ENCODE measurements at regions of chr17 and their contacts with region 1.

Region 1: DNA sequence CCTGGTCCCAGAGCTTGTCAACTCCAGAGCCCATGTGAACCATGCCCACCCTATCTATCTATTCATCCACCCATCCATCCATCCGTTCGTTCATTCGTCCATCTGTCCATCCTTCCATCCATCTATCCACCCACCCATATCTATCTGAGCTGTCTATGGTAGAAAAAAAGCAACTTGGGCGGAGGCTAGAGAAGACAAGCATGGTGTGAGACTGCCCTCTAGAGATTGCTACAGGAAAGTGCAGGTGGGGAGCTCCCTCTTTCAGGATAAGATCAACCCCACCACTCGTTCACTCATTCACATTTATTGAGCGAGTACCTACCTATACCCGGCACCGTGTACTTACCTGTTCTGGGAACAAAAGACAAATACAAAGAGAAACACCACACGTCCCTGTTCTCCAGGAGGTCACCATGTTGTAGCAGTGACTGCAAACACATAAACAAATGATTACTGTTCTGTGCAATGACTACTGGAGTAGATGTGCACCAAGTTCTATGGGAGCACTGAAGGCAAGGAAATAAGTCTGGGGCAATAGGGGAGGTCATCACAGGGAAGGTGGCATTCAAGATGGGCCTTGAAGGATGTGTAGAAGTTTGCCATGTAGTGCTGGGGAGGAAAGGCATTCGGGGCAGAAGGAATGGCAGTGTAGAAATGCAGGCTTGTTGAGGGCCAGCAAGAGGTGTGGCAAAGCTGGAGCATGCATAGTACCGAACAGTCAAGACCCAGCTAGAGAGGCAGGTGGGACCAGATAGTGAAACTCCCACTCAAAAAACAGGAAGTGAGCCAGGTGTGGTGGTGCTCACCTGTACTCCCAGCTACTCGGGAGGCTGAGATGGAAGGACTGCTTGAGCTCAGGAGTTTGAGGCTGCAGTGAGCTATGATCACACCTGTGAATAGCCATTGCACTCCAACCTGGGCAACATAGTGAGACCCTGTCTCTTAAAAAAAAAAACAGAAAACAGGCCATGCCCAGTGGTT is 13.4 kb upstream of the ATP5MC1 start:
- DNase-seq: peak; percentile 76
- H3K4me3 ChIP-seq: no peak overlapping the region
- H3K27ac ChIP-seq: no peak overlapping the region
- H3K4me1 ChIP-seq: no peaks in the 10 kb centered on the region
- H3K27me3 ChIP-seq: no peaks in the 10 kb centered on the region
- CTCF ChIP-seq: peak; percentile 87 to 89
- POLR2A ChIP-seq: no peak

Region 2: DNA sequence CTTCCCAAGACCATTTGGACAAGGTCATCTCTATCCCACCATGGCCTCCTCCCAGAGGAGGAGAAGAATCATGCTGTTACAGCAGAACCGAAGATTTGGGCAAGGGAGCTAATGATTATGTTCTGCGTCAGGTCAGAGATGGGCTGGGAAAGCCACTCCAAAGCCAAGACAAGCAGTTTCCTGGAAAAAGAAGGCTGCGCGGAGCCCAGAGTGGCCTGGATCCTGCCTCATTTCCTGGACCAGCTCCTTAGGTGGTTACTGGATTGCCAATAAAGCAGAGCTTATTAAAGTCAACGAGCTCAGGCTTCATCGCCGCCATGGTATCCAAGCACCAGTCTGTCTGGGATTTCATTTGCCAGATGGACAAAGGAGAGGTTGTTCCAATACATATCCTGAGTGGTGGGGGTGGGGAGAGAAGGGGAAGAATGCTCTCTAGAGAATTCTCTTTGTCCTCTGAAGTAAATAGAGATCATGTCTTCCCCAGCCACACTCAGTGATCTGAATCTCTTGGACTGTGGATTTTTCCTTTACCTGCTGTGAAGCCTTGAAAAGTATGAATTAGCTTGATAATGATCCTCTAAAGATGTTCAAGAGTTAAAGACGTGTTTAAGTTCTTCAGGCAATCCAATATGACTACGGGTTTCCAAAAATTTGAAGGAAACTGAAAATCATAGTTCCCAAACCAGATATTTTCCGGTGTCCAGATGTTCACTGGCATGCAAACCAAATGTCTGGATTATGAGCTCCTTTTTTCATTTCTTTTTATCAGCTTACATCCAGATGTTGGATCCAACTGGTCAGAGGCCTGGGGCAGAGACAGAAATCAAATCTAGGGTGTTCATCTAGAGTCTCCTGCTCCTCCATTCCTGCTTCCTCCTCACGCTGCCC is 174.6 kb before region 1 on chr17:
- CTCF ChIA-PET with region 1: interaction called, 11 read pairs
- POLR2A ChIA-PET with region 1: no interaction called
- dilution Hi-C with region 1: no loop called
- intact Hi-C with region 1: no loop called
- DNase-seq: no peak
- H3K4me3 ChIP-seq: no peak overlapping the region
- H3K27ac ChIP-seq: no peak overlapping the region
- H3K4me1 ChIP-seq: no peaks in the 10 kb centered on the region
- H3K27me3 ChIP-seq: peaks cover 40 to 46% of the 10 kb centered on the region in 2 experiments
- CTCF ChIP-seq: no peak
- POLR2A ChIP-seq: no peak

Region 3: DNA sequence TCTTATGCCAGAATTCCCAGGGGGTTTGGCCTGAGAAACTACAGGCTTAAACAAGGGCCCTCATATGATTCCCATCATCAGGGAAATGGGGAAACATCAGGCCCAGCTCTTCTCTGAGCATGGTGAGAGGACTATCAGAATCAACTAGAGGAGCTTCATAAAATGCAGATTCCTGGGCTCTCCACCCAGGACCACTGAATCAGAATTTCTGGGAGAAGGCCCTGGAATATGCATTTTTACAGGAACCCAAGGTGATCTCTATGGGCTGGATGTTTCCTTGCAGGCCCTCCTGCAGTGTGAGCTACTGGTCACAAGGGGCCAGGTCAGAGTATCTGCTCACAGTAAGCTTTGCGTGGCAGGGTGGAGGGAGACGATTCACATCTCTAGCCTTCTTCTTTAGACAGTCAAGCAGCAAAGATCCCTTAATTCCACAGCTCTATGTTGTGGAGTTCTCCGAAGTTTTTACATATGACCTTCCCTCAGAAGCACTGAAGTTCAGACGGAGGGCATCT is 111.9 kb before region 1 on chr17:
- CTCF ChIA-PET with region 1: interaction called, 12 read pairs
- POLR2A ChIA-PET with region 1: no interaction called
- dilution Hi-C with region 1: no loop called
- intact Hi-C with region 1: no loop called
- DNase-seq: no peak
- H3K4me3 ChIP-seq: no peak overlapping the region
- H3K27ac ChIP-seq: no peak overlapping the region
- H3K4me1 ChIP-seq: no peaks in the 10 kb centered on the region
- H3K27me3 ChIP-seq: peaks cover 20 to 33% of the 10 kb centered on the region in 2 experiments
- CTCF ChIP-seq: no peak
- POLR2A ChIP-seq: no peak

Region 4: DNA sequence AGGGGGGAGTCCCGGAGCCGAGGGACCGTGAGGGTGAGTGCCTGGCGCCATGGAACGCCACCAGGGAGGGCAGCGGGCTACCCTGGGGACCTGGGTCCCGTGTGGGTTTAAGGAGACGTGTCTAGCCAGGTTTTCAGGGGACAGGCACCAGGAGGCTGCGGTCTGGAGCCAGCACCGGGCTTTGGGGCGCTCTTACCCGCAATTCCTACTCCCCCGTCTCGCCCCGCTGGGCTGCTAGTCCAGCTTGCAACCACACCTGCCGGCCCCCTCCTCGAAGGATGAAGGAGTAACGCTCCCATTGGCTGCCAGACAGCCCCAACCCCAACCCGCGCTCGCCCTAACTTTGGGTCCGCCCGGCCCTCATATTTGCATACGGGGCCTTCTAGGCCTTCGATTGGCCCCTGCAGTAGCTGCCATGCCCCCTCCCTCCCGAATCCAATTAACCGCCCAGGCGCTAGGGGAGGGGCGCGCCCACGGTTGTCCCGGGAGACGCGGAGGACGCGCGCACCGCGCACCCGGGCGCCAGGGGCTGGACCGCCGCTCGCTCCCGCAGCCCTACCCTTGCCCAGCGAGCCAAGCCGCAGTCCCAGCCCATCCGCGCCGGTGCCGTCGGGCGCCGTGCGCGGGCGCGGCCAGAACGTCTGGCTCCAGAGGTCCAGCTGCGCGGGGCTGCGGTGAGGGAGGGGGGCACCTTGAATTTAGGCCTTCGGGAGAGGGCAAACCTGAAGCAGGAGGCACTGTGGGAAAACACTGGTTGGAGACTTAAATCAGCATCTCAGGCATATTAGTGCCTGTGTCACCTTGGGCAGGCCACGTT is 62.2 kb before region 1 on chr17 and contains the start of gene TTLL6:
- CTCF ChIA-PET with region 1: interaction called, 1,186 read pairs
- POLR2A ChIA-PET with region 1: interaction called, 3 read pairs
- dilution Hi-C with region 1: no loop called
- intact Hi-C with region 1: loop called (anchors 1 kb)
- DNase-seq: peak; percentile 85
- H3K4me3 ChIP-seq: peak within 1 kb of the TSS in 2 of 3 experiments; percentile 14 to 40
- H3K27ac ChIP-seq: no peak within 1 kb of the TSS
- H3K4me1 ChIP-seq: peaks cover 6% of the 10 kb centered on the region
- H3K27me3 ChIP-seq: peaks cover 11 to 21% of the 10 kb centered on the region in 2 experiments
- CTCF ChIP-seq: no peak
- POLR2A ChIP-seq: no peak
- total RNA-seq, gene TTLL6: not detected in 2 replicates

Region 5: DNA sequence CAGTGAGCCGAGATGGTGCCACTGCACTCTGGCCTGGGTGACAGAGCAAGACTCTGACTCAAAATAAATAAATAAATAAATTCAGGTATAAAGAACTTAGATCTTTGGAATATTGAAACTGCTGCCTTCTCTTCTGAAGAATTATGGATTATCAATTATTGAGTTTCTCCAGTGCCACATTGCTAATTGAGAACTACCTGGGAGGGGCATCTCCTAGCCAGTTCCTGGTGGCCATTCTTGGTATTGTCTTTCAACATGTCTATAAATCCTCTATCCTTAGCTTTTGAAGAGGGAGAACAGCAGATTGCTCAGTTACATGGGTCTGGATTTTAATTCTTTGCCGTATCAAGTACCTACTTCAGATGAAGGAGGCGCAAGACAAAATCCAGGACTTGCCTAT is 19.2 kb before region 1 on chr17:
- CTCF ChIA-PET with region 1: interaction called, 44 read pairs
- POLR2A ChIA-PET with region 1: no interaction called
- dilution Hi-C with region 1: no loop called
- intact Hi-C with region 1: no loop called
- DNase-seq: no peak
- H3K4me3 ChIP-seq: no peak overlapping the region
- H3K27ac ChIP-seq: no peak overlapping the region
- H3K4me1 ChIP-seq: no peaks in the 10 kb centered on the region
- H3K27me3 ChIP-seq: no peaks in the 10 kb centered on the region
- CTCF ChIP-seq: no peak
- POLR2A ChIP-seq: no peak

Measured in endothelial cell of umbilical vein (primary cell).